Sciatic nerve (tissue), 2 donors: ENCODE measurements at regions of chr1 and their contacts with region 1.

Region 1: DNA sequence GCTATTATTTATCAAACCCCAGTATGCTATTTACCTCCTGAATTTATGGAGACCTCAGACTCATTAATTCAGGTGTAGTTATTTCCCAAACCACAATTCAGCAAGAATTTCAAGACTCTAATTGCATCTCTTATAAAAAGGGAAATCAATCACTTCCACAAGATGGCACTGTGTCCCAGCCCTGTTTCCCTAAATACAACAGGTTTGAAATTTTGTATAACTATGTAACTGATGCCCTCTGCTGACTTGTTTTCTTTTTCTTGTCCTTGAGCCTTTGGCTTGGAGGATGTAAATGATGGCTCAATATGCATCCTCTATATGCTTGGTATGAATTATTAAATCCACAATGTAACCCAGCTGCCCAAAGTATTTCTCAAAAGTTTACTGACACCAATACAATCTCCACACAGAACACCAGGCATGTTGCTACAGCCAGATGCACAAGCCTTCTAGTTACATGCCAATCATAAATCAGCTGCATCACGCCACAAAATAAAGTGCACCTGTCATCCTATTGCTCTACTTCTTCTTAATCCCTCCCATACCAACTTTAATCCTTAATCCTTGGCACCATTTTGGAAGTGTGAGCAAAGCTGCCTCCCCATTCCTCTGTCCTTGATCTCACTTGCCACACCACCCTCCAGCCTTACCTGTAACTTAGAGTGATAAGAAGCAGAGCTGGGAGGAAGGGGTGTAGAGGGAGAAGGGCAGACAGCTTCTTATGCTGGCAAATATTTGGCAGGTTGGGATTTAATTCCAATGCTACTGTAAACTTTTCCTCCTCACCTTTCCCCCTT is 9.0 kb downstream of the C1orf105 start:
- DNase-seq: no peak
- ATAC-seq: peak; percentile 67

Region 2: GRCh38 chr1:172167796-172168596 is 261.5 kb before region 1 on chr1:
- intact Hi-C with region 1: no loop called
- DNase-seq: no peak
- ATAC-seq: no peak

Region 3: DNA sequence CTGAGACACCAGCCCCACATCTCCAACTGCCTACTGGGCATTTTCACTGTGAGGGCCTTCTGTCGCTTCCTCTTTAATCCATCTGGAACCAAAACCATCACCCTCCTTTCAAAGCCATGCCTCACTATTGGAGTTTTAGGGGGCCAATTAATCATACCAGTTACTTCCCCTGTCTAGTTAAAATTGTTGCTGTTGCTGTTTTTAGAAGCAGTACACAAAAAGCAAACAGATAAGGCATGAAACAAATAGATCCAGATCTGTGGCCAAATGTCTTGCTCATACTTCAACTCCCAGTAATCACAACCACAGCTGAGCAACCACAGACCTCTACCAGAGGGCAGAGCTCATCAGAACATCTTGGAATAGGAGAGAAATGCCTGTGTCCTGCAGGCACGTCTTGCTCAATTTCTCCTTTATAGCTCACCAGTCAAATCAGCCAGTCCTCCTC is 142.9 kb before region 1 on chr1:
- intact Hi-C with region 1: no loop called
- DNase-seq: no peak
- ATAC-seq: peak; percentile 93

Region 4: GRCh38 chr1:172386046-172386445 is 43.5 kb before region 1 on chr1:
- intact Hi-C with region 1: loop called (anchors 1 kb)
- DNase-seq: no peak
- ATAC-seq: no peak